Mammary epithelial cell (primary cell): ENCODE measurements at regions of chr6 and their contacts with region 1.

Region 1: GRCh38 chr6:87297115-87297514 is 25.3 kb upstream of the SMIM8 start:
- DNase-seq: no peak
- H3K4me3 ChIP-seq: no peak overlapping the region
- H3K27ac ChIP-seq: no peak overlapping the region
- H3K4me1 ChIP-seq: peaks cover 4% of the 10 kb centered on the region
- H3K27me3 ChIP-seq: peaks cover 2% of the 10 kb centered on the region
- CTCF ChIP-seq: no peak

Region 2: DNA sequence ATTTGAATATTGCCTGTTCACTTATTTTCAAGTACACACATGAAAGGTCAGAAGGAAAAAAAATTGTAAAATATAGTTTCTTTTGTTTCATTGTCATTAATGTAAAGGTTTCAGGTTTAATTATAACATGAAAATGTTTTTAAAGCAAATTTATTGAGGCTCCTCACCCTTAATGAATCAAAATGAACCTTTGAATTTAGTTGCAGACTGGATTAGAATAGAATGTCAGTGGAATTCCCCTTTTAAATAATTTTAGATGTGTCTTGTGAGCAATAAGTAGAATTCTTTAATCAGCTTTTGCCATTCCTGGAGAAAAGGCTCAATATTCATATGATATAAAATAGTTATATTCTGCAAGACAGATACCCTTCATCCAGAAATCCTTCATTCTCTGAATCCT is 45.4 kb before region 1 on chr6:
- CTCF ChIA-PET with region 1: no interaction called
- dilution Hi-C with region 1: no loop called
- in situ Hi-C with region 1: no loop called
- intact Hi-C with region 1: loop called (anchors 2 kb)
- DNase-seq: no peak
- H3K4me3 ChIP-seq: no peak overlapping the region
- H3K27ac ChIP-seq: no peak overlapping the region
- H3K4me1 ChIP-seq: no peaks in the 10 kb centered on the region
- H3K27me3 ChIP-seq: no peaks in the 10 kb centered on the region
- CTCF ChIP-seq: no peak

Region 3: DNA sequence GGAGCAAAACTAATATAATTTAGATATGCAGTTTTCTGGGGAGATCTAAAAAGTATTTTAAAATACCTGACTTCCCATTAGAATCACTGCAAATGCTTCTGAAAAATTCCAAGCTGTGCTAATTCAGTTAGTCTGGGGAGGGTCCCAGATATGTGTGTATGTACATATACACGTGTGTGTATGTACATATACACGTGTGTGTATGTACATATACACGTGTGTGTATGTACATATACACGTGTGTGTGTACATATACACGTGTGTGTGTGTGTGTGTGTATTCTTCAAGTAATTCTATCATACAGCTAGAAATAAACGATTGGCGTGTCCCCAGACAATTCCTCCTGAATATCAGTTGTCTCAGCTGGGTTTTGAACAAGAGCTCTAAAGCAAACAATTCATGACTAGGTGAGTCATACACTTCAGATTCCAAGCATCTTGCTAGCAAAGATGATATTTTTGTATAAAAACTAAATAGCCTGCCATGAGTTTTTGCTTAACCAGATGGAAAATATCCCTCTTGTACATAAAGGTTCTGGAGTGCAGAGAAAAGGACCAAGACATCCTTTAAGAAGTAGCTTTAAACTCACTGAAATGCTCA is 808.7 kb after region 1 on chr6:
- CTCF ChIA-PET with region 1: no interaction called
- dilution Hi-C with region 1: no loop called
- in situ Hi-C with region 1: no loop called
- intact Hi-C with region 1: no loop called
- DNase-seq: no peak
- H3K4me3 ChIP-seq: no peak overlapping the region
- H3K27ac ChIP-seq: no peak overlapping the region
- H3K4me1 ChIP-seq: no peaks in the 10 kb centered on the region
- H3K27me3 ChIP-seq: no peaks in the 10 kb centered on the region
- CTCF ChIP-seq: no peak